Mammary epithelial cell (primary cell): ENCODE measurements at regions of chr17 and their contacts with region 1.

Region 1: DNA sequence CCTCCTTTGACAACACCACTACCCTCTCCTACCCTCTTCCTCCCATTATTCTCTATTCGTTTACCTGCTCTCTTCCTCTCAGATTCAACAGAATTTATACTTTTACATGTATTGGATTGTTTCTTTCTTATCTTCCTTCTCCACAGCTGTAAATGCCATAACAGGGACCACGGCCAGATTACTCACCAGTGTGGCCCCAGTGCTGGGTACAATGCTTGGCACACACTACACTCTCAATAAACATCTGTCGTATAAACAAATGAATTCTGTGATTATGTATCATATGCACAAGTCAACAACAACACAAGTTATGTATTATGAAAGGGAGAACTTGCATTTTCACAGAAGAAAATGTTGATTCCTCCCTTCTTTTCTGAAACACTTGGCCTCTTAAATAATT is 20.0 kb downstream of the AARSD1 start:
- DNase-seq: no peak
- H3K4me3 ChIP-seq: no peak overlapping the region
- H3K27ac ChIP-seq: no peak overlapping the region
- H3K4me1 ChIP-seq: no peaks in the 10 kb centered on the region
- H3K27me3 ChIP-seq: no peaks in the 10 kb centered on the region
- CTCF ChIP-seq: no peak

Region 2: GRCh38 chr17:42850954-42851353 is 93.3 kb before region 1 on chr17 and contains the start of gene AOC3:
- CTCF ChIA-PET with region 1: no interaction called
- dilution Hi-C with region 1: loop called (anchors 5 kb)
- in situ Hi-C with region 1: no loop called
- intact Hi-C with region 1: no loop called
- DNase-seq: no peak
- H3K4me3 ChIP-seq: no peak within 1 kb of the TSS
- H3K27ac ChIP-seq: no peak within 1 kb of the TSS
- H3K4me1 ChIP-seq: peaks cover 5% of the 10 kb centered on the region
- H3K27me3 ChIP-seq: no peaks in the 10 kb centered on the region
- CTCF ChIP-seq: no peak
- total RNA-seq, gene AOC3: 0.31 TPM in 1 of 2 donors, not detected in the other

Region 3: GRCh38 chr17:42886283-42887176 is 57.7 kb before region 1 on chr17:
- CTCF ChIA-PET with region 1: no interaction called
- dilution Hi-C with region 1: loop called (anchors 10 kb)
- in situ Hi-C with region 1: no loop called
- intact Hi-C with region 1: no loop called
- DNase-seq: no peak
- H3K4me3 ChIP-seq: no peak overlapping the region
- H3K27ac ChIP-seq: no peak overlapping the region
- H3K4me1 ChIP-seq: no peaks in the 10 kb centered on the region
- H3K27me3 ChIP-seq: no peaks in the 10 kb centered on the region
- CTCF ChIP-seq: no peak

Region 4: GRCh38 chr17:42980398-42981397 is 36.5 kb after region 1 on chr17 and contains the start of gene RUNDC1:
- CTCF ChIA-PET with region 1: no interaction called
- dilution Hi-C with region 1: loop called (anchors 5 kb)
- in situ Hi-C with region 1: no loop called
- intact Hi-C with region 1: no loop called
- DNase-seq: peak; percentile 83
- H3K4me3 ChIP-seq: peak within 1 kb of the TSS; percentile 57 to 89 (median 75)
- H3K27ac ChIP-seq: peak within 1 kb of the TSS; percentile 83
- H3K4me1 ChIP-seq: peaks cover 18% of the 10 kb centered on the region
- H3K27me3 ChIP-seq: no peaks in the 10 kb centered on the region
- CTCF ChIP-seq: peak; percentile 9 to 39
- total RNA-seq, gene RUNDC1: 14.5 to 16.2 TPM